Activated B cell treated with CpG ODN at 0.5 μM for 24 hours (primary cell): ENCODE measurements at regions of chr1 and their contacts with region 1.

Region 1: DNA sequence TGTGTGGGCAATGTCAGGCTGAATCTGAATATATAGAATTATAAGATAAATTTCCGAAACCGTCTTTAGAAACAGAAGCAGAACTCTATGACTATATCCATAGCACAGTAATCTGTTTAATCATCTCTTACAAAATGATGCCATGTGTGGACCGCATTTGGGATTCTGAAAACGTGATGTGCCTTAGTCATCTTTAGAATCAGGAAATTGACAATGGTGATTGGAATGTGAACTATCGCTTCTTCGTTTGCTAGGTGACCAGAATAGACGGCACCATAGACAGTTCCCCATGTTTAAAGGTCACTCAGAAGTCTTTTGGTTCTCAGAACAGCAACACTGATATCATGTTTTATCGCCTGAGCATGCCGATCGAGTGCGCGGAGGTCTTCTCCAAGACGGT is 300.3 kb downstream of the ZP4 start:
- DNase-seq: no peak
- ATAC-seq: no peak
- H3K4me3 Mint-ChIP-seq: no peak overlapping the region
- H3K27ac Mint-ChIP-seq: no peak overlapping the region
- H3K4me1 Mint-ChIP-seq: no peaks in the 10 kb centered on the region
- H3K27me3 Mint-ChIP-seq: no peaks in the 10 kb centered on the region
- CTCF ChIP-seq: no peak

Region 2: GRCh38 chr1:237568955-237569354 is 21.4 kb before region 1 on chr1:
- CTCF ChIA-PET with region 1: interaction called, 3 read pairs
- POLR2A ChIA-PET with region 1: no interaction called
- intact Hi-C with region 1: loop called (anchors 2 kb)
- DNase-seq: no peak
- ATAC-seq: no peak
- H3K4me3 Mint-ChIP-seq: no peak overlapping the region
- H3K27ac Mint-ChIP-seq: no peak overlapping the region
- H3K4me1 Mint-ChIP-seq: no peaks in the 10 kb centered on the region
- H3K27me3 Mint-ChIP-seq: no peaks in the 10 kb centered on the region
- CTCF ChIP-seq: no peak

Region 3: GRCh38 chr1:237610157-237610556 is 19.8 kb after region 1 on chr1:
- CTCF ChIA-PET with region 1: no interaction called
- POLR2A ChIA-PET with region 1: no interaction called
- intact Hi-C with region 1: no loop called
- DNase-seq: no peak
- ATAC-seq: no peak
- H3K4me3 Mint-ChIP-seq: no peak overlapping the region
- H3K27ac Mint-ChIP-seq: no peak overlapping the region
- H3K4me1 Mint-ChIP-seq: no peaks in the 10 kb centered on the region
- H3K27me3 Mint-ChIP-seq: no peaks in the 10 kb centered on the region
- CTCF ChIP-seq: no peak